AG04450 (cell line): ENCODE measurements at regions of chr19 and their contacts with region 1.

Region 1: GRCh38 chr19:47713046-47714021 is at the start of gene EHD2:
- DNase-seq: peak; percentile 48
- H3K4me3 ChIP-seq: peak within 1 kb of the TSS; percentile 93
- H3K27ac ChIP-seq: peak within 1 kb of the TSS; percentile 52
- H3K27me3 ChIP-seq: no peaks in the 10 kb centered on the region
- CTCF ChIP-seq: peak; percentile 92
- polyA plus RNA-seq, gene EHD2: 84.0 and 126 TPM in 2 replicates

Region 2: DNA sequence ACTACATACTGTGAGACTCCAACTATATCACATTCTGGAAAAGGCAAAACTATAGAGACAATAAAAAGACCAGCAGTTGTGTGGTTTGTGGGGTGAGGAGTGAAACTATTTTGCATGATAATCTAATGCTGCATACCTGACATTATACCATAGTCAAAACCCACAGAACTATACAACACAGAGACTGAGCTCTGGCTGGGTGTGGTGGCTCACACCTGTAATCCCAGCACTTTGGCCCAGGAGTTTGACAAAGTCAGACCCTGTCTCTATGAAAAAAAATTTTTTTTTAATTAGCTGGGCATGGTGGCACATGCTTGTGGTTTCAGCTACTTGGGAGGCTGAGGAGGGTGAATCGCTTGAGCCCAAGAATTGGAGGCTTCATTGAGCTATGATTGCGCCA is 152.3 kb before region 1 on chr19:
- CTCF ChIA-PET with region 1: no interaction called
- POLR2A ChIA-PET with region 1: no interaction called
- DNase-seq: no peak
- H3K4me3 ChIP-seq: no peak overlapping the region
- H3K27ac ChIP-seq: no peak overlapping the region
- H3K27me3 ChIP-seq: peaks cover 2% of the 10 kb centered on the region
- CTCF ChIP-seq: no peak

Region 3: GRCh38 chr19:47663841-47664771 is 49.2 kb before region 1 on chr19:
- CTCF ChIA-PET with region 1: no interaction called
- POLR2A ChIA-PET with region 1: no interaction called
- DNase-seq: peak; percentile 91
- H3K4me3 ChIP-seq: peak overlapping the region; percentile 37
- H3K27ac ChIP-seq: peak overlapping the region; percentile 100
- H3K27me3 ChIP-seq: no peaks in the 10 kb centered on the region
- CTCF ChIP-seq: no peak

Region 4: GRCh38 chr19:47697863-47698609 is 15.3 kb before region 1 on chr19:
- CTCF ChIA-PET with region 1: interaction called, 12 read pairs
- POLR2A ChIA-PET with region 1: no interaction called
- DNase-seq: peak; percentile 53
- H3K4me3 ChIP-seq: no peak overlapping the region
- H3K27ac ChIP-seq: peak overlapping the region; percentile 11
- H3K27me3 ChIP-seq: no peaks in the 10 kb centered on the region
- CTCF ChIP-seq: peak; percentile 100

Region 5: GRCh38 chr19:47729992-47730889 is 16.9 kb after region 1 on chr19:
- CTCF ChIA-PET with region 1: interaction called, 28 read pairs
- POLR2A ChIA-PET with region 1: interaction called, 6 read pairs
- DNase-seq: no peak
- H3K4me3 ChIP-seq: no peak overlapping the region
- H3K27ac ChIP-seq: peak overlapping the region; percentile 73
- H3K27me3 ChIP-seq: no peaks in the 10 kb centered on the region
- CTCF ChIP-seq: no peak

Region 6: DNA sequence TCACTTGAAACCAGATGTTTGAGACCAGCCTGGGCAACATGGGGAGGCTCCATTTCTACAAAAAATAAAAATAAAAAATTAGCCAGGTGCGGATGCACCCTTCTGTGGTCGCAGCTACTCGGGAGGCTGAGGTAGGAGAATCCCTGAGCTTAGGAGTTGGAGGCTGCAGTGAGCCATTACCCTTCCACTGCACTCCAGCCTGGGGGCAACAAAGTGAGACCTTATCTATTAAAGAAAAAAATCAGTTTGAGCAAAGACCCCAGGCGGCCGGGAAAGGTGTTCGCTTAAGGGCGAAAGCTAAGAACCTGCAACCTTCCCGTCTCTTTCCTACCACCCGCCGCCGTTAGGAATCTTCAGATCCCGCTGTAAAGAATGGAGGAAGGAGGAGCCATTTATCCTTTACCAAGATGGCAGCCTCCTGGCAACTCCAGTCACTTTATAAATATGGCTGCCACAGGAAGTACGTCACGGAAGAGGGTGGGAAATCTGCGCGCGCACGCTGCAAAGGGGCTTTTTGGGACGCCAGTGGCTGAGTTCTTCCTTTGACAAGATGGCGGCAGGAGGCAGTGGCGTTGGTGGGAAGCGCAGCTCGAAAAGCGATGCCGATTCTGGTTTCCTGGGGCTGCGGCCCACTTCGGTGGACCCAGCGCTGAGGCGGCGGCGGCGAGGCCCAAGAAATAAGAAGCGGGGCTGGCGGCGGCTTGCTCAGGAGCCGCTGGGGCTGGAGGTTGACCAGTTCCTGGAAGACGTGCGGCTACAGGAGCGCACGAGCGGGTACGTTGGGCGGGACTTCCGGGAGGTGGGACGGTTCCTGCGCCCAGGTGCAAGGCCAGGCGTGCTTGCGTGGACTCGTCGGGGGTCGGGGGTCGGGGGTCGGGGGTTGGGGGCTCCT is 31.9 kb after region 1 on chr19 and contains the start of gene NOP53:
- CTCF ChIA-PET with region 1: interaction called, 43 read pairs
- POLR2A ChIA-PET with region 1: interaction called, 87 read pairs
- DNase-seq: peak; percentile 95
- H3K4me3 ChIP-seq: peak within 1 kb of the TSS; percentile 75
- H3K27ac ChIP-seq: peak within 1 kb of the TSS; percentile 90
- H3K27me3 ChIP-seq: no peaks in the 10 kb centered on the region
- CTCF ChIP-seq: no peak
- polyA plus RNA-seq, gene NOP53: 114 and 123 TPM in 2 replicates